ENCODE measurements at regions of chrX and their contacts with region 1.

Region 1: GRCh38 chrX:118847676-118848075 is 24.1 kb downstream of the ZCCHC12 start:
- DNase-seq: peak; percentile 60
- H3K4me3 Mint-ChIP-seq: no peak overlapping the region
- H3K27ac Mint-ChIP-seq: no peak overlapping the region
- H3K4me1 Mint-ChIP-seq: no peaks in the 10 kb centered on the region
- H3K27me3 Mint-ChIP-seq: peaks cover 5% of the 10 kb centered on the region

Region 2: DNA sequence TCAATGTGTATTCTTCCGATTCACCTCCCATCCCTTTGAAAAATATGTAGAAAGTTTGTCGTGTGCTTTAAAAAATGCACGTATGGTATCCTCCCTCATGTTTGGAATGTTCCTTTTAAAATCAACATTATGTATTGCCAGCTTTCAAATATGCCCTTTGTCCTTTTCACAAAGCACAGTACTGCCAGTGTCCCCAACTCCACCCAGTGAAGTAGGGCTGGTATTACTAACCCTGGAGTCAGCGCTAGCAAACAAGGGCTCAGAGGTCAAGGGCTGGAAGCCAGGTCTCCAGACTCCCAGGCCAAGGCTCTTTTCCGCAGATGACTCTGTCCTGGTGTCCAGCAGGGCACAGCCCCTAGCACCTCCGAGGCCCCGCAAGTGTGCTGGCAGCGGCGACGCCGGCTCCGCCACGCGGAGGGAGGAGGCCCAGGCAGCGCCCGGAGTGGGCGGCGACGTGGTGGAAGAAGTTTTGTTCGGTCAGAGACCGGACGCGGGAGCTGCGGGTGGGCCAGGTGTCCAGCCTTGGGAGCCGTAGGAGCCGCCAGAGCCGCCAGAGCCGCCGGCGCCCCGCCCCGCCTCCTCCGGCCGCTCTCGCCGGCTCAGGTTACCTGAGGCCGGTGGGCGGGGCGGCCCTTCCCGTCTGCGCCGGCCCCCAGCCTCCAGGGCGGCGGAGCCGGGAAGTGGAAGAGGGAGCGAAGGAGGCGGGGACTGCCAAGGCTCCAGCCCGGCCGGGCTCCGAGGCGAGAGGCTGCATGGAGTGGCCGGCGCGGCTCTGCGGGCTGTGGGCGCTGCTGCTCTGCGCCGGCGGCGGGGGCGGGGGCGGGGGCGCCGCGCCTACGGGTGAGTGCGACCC is 120.6 kb before region 1 on chrX and contains the start of gene IL13RA1:
- intact Hi-C with region 1: no loop called
- DNase-seq: peak; percentile 72
- H3K4me3 Mint-ChIP-seq: peak within 1 kb of the TSS; percentile 57
- H3K27ac Mint-ChIP-seq: peak within 1 kb of the TSS; percentile 49
- H3K4me1 Mint-ChIP-seq: peaks cover 2% of the 10 kb centered on the region
- H3K27me3 Mint-ChIP-seq: peaks cover 32% of the 10 kb centered on the region
- total RNA-seq, gene IL13RA1: 0.33 and 0.36 TPM in 2 replicates

Region 3: DNA sequence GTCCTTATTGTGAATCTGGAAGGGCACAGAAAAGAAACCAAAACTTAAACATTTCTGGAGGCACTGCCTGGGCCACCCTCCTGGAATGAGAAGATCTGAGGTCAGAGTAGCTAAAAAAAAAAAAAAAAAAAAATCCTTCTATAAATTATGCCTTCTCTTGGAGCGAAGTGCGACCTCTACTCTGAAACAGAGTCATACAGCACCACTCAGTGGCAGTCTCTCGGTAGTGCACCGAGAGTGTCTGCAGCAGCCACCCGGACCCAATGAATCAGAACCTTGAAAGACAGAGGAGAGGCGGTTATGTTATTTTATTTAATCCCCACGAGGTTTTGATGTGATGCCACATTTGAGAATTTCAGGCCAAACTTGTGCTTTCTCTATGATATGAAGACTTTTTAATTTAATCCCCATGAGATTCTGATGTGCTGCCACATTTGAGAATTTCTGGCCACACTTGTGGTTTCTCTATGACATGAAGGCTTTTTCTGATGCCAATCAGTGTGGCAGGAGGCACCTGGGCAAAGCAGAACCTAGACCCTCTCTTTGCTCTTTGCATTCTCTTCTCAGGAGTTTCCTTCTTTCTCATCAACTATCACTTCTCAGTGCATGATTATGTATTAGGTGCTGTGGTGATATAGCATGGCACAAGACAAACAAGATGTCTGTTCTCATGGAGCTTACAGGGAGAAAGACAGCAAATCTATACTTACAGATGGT is 219.5 kb after region 1 on chrX:
- intact Hi-C with region 1: loop called (anchors 2 kb)
- DNase-seq: peak; percentile 69
- H3K4me3 Mint-ChIP-seq: no peak overlapping the region
- H3K27ac Mint-ChIP-seq: no peak overlapping the region
- H3K4me1 Mint-ChIP-seq: no peaks in the 10 kb centered on the region
- H3K27me3 Mint-ChIP-seq: peaks cover 2% of the 10 kb centered on the region

Measured in activated CD4-positive, alpha-beta T cell treated with anti-CD3 and anti-CD28 coated beads, Interleukin-2, amount 10 ng/mL, durations not matched to agents 24 days and 14 days (primary cell).